BJ (cell line): ENCODE measurements at regions of chr6 and their contacts with region 1.

Region 1: GRCh38 chr6:125974214-125974866 is 12.0 kb upstream of the TRMT11 start:
- DNase-seq: no peak
- H3K4me3 ChIP-seq: no peak overlapping the region
- H3K27me3 ChIP-seq: no peaks in the 10 kb centered on the region
- CTCF ChIP-seq: peak; percentile 42; the same call in 1 of the 2 replicates

Region 2: GRCh38 chr6:125050663-125051318 is 923.5 kb before region 1 on chr6:
- CTCF ChIA-PET with region 1: no interaction called
- POLR2A ChIA-PET with region 1: no interaction called
- DNase-seq: no peak
- H3K4me3 ChIP-seq: no peak overlapping the region
- H3K27me3 ChIP-seq: no peaks in the 10 kb centered on the region
- CTCF ChIP-seq: no peak

Region 3: GRCh38 chr6:125798734-125799508 is 175.4 kb before region 1 on chr6:
- CTCF ChIA-PET with region 1: no interaction called
- POLR2A ChIA-PET with region 1: interaction called, 12 read pairs
- DNase-seq: no peak
- H3K4me3 ChIP-seq: no peak overlapping the region
- H3K27me3 ChIP-seq: no peaks in the 10 kb centered on the region
- CTCF ChIP-seq: no peak

Region 4: GRCh38 chr6:125858427-125859320 is 115.7 kb before region 1 on chr6:
- CTCF ChIA-PET with region 1: interaction called, 15 read pairs
- POLR2A ChIA-PET with region 1: no interaction called
- DNase-seq: no peak
- H3K4me3 ChIP-seq: no peak overlapping the region
- H3K27me3 ChIP-seq: no peaks in the 10 kb centered on the region
- CTCF ChIP-seq: peak; percentile 90